Posterior cingulate gyrus (tissue), 11 donors: ENCODE measurements at regions of chr2 and their contacts with region 1.

Region 1: GRCh38 chr2:45935791-45936622 is 284.5 kb downstream of the PRKCE start:
- DNase-seq: peak; percentile 63 to 96 (median 81)

Region 2: DNA sequence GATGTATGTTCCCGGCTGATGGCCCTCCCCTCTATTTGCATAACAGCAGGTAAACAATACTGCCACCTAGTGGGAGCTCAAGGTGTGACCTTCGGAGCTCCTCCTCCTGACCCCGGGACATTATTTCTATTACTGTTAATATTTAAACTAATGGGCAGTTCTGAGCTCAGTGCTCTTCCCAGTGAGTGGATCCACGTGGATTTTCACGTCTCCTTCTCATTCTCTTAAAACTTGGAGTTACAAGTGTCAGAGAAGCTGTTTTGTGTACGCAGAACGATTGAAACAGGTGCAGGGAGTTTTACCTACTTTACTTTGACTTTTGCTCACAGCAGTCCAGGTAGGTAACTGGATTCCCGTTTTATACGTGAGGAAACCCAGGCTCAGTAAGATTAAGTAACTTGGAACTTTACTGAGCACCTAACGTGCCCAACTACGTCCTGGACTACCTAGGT is 157.3 kb before region 1 on chr2:
- intact Hi-C with region 1: loop called (anchors 2 kb)
- DNase-seq: peak in 4 of 10 donors; percentile 41 to 63 (median 46)

Region 3: GRCh38 chr2:45869165-45869501 is 66.9 kb before region 1 on chr2:
- intact Hi-C with region 1: no loop called
- DNase-seq: no peak

Region 4: DNA sequence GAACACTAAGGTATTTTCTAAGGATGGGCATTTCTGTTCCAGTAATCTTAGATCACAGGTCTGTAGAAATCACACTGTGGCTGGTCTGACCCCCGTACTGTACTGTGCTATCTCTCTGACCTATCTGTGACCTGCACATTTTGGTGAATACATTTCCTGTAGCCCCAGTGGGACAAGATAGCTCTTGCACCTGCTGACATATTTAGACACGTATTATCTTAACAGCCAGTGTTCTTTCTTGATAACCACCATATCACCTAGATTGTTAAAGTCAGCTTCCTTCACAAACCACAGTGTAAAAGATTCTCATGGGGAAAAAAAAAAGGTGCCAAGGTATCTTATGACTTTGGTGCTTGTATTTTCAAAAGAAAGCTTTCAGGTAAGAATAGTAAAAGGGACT is 503.6 kb after region 1 on chr2:
- intact Hi-C with region 1: no loop called
- DNase-seq: no peak